ENCODE measurements at regions of chr11 and their contacts with region 1.

Region 1: DNA sequence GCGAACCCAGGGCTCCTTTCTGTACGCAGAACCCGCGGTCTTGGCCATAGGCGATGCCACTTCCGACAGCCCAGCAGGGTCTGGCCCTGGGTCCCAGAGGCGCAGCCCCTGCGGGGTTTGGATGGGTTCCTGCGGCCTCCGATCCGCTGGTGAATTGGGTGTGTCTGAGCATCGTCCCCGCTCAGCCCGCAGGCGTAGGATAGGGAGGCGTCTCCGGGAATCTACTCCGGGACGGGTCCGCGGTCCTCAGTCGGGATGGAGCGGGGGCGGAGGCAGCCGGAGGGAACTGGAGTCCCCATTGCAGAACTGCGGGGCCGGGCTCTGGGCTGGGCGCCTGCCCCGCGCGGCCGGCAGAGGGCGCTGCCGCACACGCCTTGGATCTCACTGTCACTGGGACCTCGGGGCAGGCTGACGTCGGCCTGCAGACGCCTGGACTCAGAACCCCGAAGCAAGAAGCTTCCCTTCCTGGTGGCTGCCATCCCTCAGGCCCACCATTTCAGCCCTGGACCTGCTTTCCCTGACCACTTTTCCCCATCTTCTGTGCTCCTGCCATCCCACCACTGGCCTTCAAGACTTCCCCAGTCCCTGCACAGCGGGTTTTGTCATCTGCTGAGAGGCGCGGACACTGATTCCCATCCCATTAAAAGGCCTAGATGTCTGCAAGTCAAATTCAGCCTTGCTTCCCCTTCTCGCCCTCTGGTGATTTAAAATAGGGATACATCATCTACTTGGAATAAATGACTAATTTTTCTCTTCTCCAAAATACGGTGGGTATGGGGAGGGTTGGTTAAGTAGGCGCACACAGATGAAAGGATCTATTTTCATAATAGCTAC is 38.3 kb upstream of the CREB3L1 start:
- DNase-seq: no peak
- ATAC-seq: peak; percentile 81
- H3K4me3 ChIP-seq: peak overlapping the region; percentile 52 to 67
- H3K27ac ChIP-seq: peak overlapping the region; percentile 62; the same call in 1 of the 2 replicates
- H3K4me1 ChIP-seq: peaks cover 29% of the 10 kb centered on the region
- H3K27me3 ChIP-seq: no peaks in the 10 kb centered on the region
- CTCF ChIP-seq: peak; percentile 99

Region 2: DNA sequence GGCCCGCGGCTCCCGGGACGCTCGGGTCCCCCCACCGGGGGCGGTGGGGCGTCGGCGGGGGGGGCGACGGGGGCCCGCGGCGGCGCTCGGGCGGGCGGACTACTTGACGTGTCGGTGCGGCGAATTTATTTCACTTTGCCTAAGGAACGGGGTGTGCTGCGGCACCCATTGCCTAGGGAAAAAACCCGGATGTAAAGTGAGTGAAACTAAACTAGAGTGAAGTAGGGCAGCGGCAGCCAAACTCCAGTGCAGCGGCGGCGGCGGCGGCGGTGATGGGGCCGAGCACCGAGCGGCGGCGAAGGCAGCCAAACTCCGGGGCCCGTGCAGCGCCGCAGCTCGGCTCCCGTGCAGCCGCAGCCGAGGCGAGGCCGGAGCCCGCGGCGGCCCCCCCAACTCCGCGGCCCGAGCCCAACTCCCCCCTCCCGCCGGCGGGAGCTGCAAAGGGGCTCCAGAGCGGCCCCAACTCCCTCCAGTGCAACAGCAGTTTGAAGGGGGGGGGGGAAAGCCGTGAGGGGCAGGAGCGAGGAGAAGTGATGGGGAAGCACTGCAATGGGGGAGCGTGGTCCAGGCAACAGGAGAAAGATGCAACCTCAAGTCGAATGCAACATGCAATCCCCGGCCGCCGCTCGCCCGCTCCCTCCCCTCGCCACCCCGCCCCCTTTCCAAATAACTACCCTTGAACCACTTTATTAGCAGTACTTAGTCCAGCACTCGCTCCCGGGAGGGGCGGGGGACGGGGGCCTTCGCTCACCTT is 117.3 kb before region 1 on chr11:
- CTCF ChIA-PET with region 1: no interaction called
- POLR2A ChIA-PET with region 1: interaction called, 6 read pairs
- in situ Hi-C with region 1: no loop called
- intact Hi-C with region 1: loop called (anchors 5 kb)
- DNase-seq: no peak
- ATAC-seq: peak; percentile 66
- H3K4me3 ChIP-seq: peak overlapping the region; percentile 77 to 82
- H3K27ac ChIP-seq: peak overlapping the region; percentile 95
- H3K4me1 ChIP-seq: peaks cover 22% of the 10 kb centered on the region
- H3K27me3 ChIP-seq: no peaks in the 10 kb centered on the region
- CTCF ChIP-seq: no peak

Region 3: GRCh38 chr11:46216019-46216764 is 23.0 kb before region 1 on chr11:
- CTCF ChIA-PET with region 1: interaction called, 11 read pairs
- POLR2A ChIA-PET with region 1: no interaction called
- in situ Hi-C with region 1: no loop called
- intact Hi-C with region 1: no loop called
- DNase-seq: no peak
- ATAC-seq: peak; percentile 86
- H3K4me3 ChIP-seq: peak overlapping the region; percentile 19 to 45; a peak in 3 of 4 replicates
- H3K27ac ChIP-seq: peak overlapping the region; percentile 67
- H3K4me1 ChIP-seq: peaks cover 7% of the 10 kb centered on the region; the same call in 1 of the 2 replicates
- H3K27me3 ChIP-seq: no peaks in the 10 kb centered on the region
- CTCF ChIP-seq: no peak

Region 4: GRCh38 chr11:46308631-46309419 is 69.6 kb after region 1 on chr11:
- CTCF ChIA-PET with region 1: interaction called, 17 read pairs
- POLR2A ChIA-PET with region 1: no interaction called
- in situ Hi-C with region 1: no loop called
- intact Hi-C with region 1: loop called (anchors 2 kb)
- DNase-seq: peak; percentile 48
- ATAC-seq: peak; percentile 93
- H3K4me3 ChIP-seq: no peak overlapping the region
- H3K27ac ChIP-seq: no peak overlapping the region
- H3K4me1 ChIP-seq: no peaks in the 10 kb centered on the region
- H3K27me3 ChIP-seq: no peaks in the 10 kb centered on the region
- CTCF ChIP-seq: peak; percentile 96

Region 5: DNA sequence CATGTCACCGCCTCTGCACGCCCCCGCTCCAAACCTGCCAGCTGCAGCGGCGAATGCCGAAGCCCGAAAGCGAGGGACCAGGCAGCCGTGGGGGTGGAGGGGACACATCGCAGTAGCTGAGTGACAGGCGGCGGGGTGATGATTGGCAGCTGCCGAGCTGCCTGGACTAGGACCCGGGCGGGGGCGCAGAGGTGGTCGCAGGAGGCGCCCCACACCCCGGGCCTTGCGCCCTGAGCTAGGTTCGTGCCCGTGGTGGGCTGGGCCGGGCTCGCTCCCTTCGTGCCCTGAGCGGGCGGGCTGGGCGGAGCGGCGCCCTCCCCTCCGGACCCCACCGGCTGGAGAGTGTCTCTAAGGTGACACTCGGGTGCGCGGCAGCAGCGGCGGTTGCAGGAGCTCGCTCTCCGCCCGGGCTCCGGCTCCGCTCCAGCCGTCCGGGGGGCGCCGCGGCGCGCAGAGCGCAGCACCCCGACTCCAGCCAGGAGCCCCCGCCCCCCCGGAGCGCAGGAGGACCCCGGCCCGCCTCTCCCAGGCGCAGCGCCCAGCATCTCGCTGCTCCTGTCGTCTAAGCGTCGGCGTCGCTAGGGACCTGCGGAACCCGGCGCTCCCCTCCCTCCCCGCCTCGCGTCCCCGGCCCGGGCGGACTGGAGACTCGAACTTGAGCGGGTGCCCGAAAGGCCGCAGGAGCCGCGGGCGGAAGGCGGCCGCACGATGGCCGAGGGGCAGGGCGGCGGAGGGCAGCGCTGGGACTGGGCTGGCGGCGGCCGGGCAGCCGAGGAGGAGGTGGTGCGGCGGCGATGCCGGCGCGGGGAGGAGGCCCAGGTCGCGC is 93.6 kb after region 1 on chr11:
- CTCF ChIA-PET with region 1: interaction called, 13 read pairs
- POLR2A ChIA-PET with region 1: interaction called, 3 read pairs
- in situ Hi-C with region 1: no loop called
- intact Hi-C with region 1: no loop called
- DNase-seq: no peak
- ATAC-seq: peak; percentile 65
- H3K4me3 ChIP-seq: peak overlapping the region; percentile 28 to 33
- H3K27ac ChIP-seq: no peak overlapping the region
- H3K4me1 ChIP-seq: no peaks in the 10 kb centered on the region
- H3K27me3 ChIP-seq: peaks cover 13% of the 10 kb centered on the region
- CTCF ChIP-seq: no peak